ENCODE measurements at regions of chr2 and their contacts with region 1.

Region 1: DNA sequence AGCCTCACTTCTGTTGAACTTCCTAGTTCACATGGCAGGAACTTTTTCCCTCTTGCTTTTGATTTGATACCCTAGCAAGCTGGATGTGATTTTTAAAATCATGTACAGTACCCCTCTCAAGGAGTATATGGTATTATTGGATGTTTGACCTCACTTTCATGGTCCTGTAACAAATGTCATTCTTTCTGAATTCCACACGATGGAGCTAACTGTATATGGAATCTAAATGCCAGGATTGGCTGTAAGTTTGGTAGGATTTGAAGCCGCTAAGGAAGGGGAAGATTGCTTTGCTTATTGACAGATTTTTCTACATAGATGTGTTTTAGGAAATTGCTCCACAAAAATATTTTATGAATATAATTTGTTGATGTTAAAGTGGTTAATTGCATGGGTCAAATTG is 18.3 kb downstream of the MAIP1 start:
- DNase-seq: no peak
- H3K4me3 Mint-ChIP-seq: no peak overlapping the region
- H3K27ac Mint-ChIP-seq: no peak overlapping the region
- H3K4me1 Mint-ChIP-seq: peaks cover 13% of the 10 kb centered on the region
- H3K27me3 Mint-ChIP-seq: no peaks in the 10 kb centered on the region

Region 2: GRCh38 chr2:199985625-199986207 is 12.0 kb after region 1 on chr2:
- CTCF ChIA-PET with region 1: interaction called, 14 read pairs
- DNase-seq: peak; percentile 79
- H3K4me3 Mint-ChIP-seq: no peak overlapping the region
- H3K27ac Mint-ChIP-seq: peak overlapping the region; percentile 64
- H3K4me1 Mint-ChIP-seq: peaks cover 6% of the 10 kb centered on the region
- H3K27me3 Mint-ChIP-seq: peaks cover 3% of the 10 kb centered on the region

Region 3: GRCh38 chr2:200003444-200003843 is 29.7 kb after region 1 on chr2:
- CTCF ChIA-PET with region 1: no interaction called
- DNase-seq: no peak
- H3K4me3 Mint-ChIP-seq: no peak overlapping the region
- H3K27ac Mint-ChIP-seq: no peak overlapping the region
- H3K4me1 Mint-ChIP-seq: no peaks in the 10 kb centered on the region
- H3K27me3 Mint-ChIP-seq: peaks cover 11% of the 10 kb centered on the region

Measured in activated naive CD4-positive, alpha-beta T cell treated with anti-CD3 and anti-CD28 coated beads, Interleukin-2, amount 10 ng/mL, durations not matched to agents 7 days and 5 days (primary cell).